ENCODE measurements at regions of chr17 and their contacts with region 1.

Region 1: DNA sequence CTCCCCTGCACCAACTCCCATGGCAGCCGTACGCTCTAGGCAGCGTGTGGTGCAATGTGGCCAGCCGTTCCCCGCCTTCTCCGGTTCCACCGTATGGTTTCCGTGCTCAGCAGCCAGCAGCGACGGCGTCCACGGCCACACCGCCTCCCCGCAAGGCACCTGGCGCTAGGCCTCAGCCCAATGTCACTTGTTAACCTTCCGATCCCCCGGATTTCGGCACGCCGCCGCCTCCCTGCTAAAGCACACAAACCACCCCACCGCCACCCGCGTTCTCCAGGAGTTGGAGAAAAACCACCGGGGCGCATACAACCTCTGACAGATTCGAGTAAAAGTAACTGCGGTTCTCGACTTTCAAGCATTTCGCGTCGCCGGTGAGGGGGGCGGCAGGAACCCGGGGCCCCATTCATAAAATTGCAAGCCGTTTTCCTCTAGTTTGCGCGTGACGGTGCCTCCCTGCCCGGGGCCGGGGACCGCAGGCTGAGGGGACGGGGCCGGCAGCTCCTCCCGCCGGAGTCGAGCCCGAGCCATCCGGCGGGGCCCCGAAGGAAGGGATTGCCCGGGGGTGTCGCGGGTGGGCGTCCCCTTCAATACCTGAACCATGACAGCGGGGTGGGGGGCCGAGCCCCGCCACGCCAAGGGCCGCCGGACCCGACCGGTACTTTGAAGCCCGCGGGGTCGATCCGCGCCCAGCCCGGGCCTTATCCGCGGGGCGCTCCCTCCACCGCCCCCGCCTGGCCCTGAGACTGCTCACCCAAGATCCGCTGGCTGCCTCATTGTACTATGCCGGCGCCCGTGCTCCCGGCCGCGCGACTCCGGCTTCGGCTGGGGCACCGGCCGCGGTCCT is at the start of gene TEX2:
- DNase-seq: peak in 1 of 2 experiments; percentile 62
- H3K4me3 ChIP-seq: peak within 1 kb of the TSS; percentile 79
- H3K4me1 ChIP-seq: peaks cover 40% of the 10 kb centered on the region
- H3K27me3 ChIP-seq: no peaks in the 10 kb centered on the region

Region 2: DNA sequence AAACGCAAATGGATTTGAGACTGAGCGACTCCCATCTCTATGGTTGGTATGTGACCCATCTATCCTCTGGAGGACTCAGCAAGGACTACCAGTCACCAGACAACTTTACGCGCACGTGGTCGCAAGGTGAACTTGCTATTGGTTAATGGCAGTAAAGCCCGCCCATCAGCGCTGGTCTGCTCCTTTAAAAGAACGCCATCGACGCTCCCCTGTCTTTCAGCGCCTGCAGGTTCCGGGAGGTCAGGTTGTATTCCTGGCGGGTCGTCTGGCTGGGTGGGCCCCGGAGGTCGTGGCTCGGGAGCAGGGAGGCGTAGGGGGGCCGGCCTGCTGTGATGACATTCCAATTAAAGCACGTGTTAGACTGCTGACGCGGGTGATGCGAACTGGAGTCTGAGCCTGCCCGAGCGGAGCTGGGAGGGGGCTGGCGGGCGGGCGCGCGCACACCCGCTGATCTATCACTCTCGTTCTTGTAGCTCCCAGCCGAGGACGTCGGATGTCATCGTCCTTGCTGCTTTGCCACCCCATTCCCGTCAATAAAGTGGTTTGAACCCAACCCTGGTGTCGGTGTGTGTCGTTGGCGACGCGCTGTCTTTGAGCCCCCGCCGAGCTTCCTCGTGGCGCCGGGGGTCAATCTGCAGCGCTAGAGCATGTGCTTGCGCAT is 116.8 kb before region 1 on chr17:
- in situ Hi-C with region 1: loop called (anchors 10 kb)
- DNase-seq: peak; percentile 96 to 98
- H3K4me3 ChIP-seq: peak overlapping the region; percentile 91
- H3K4me1 ChIP-seq: peaks cover 8% of the 10 kb centered on the region
- H3K27me3 ChIP-seq: no peaks in the 10 kb centered on the region